Body of pancreas (tissue), 4 donors: ENCODE measurements at regions of chr4 and their contacts with region 1.

Region 1: GRCh38 chr4:40149960-40150385 is 46.9 kb upstream of the RHOH start:
- DNase-seq: peak; percentile 67 to 79 (median 74)
- ATAC-seq: peak; percentile 65
- H3K4me3 ChIP-seq: no peak overlapping the region
- H3K27ac ChIP-seq: no peak overlapping the region
- H3K4me1 ChIP-seq: peaks cover 7% of the 10 kb centered on the region
- H3K27me3 ChIP-seq: no peaks in the 10 kb centered on the region
- CTCF ChIP-seq: peak; percentile 51 to 92 (median 85)
- POLR2A ChIP-seq: no peak

Region 2: GRCh38 chr4:39950861-39951481 is 199.0 kb before region 1 on chr4:
- intact Hi-C with region 1: no loop called
- DNase-seq: no peak
- ATAC-seq: no peak
- H3K4me3 ChIP-seq: no peak overlapping the region
- H3K27ac ChIP-seq: no peak overlapping the region
- H3K4me1 ChIP-seq: peaks cover 9% of the 10 kb centered on the region
- H3K27me3 ChIP-seq: no peaks in the 10 kb centered on the region
- CTCF ChIP-seq: no peak
- POLR2A ChIP-seq: no peak

Region 3: GRCh38 chr4:40193016-40193571 is 43.1 kb after region 1 on chr4:
- intact Hi-C with region 1: no loop called
- DNase-seq: no peak
- ATAC-seq: no peak
- H3K4me3 ChIP-seq: no peak overlapping the region
- H3K27ac ChIP-seq: no peak overlapping the region
- H3K4me1 ChIP-seq: peaks cover 9% of the 10 kb centered on the region
- H3K27me3 ChIP-seq: no peaks in the 10 kb centered on the region
- CTCF ChIP-seq: no peak
- POLR2A ChIP-seq: no peak

Region 4: DNA sequence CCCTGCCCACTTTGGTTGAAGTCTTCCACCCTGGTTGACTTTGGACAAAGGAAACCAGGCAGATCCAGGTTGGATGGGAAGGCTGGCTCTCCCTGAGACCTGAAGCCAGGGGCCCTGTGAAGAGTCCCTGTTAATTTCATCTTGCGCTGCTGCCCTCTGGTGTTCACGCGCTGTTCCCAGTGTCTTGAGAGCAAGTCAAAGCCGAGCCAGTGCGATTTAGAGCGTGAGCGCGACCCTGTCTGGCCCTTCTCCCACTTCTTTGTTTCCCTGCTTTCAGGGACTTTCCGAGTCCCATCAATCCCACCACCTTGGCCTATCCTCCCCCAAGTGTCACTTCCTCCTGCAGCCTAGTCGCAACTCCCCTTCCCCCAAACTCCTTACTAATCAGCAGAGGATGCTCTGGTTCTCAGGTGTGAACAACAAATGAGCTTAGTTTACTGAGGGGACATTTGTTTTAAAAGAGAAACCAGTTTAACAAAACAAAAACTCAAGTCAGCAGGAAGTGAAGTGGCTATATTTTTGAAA is 159.3 kb after region 1 on chr4:
- intact Hi-C with region 1: loop called (anchors 5 kb)
- DNase-seq: peak; percentile 90 to 96 (median 92)
- ATAC-seq: peak; percentile 92
- H3K4me3 ChIP-seq: no peak overlapping the region
- H3K27ac ChIP-seq: no peak overlapping the region
- H3K4me1 ChIP-seq: no peaks in the 10 kb centered on the region
- H3K27me3 ChIP-seq: no peaks in the 10 kb centered on the region
- CTCF ChIP-seq: peak; percentile 80 to 94 (median 86)
- POLR2A ChIP-seq: no peak